ENCODE measurements at regions of chr13 and their contacts with region 1.

Region 1: DNA sequence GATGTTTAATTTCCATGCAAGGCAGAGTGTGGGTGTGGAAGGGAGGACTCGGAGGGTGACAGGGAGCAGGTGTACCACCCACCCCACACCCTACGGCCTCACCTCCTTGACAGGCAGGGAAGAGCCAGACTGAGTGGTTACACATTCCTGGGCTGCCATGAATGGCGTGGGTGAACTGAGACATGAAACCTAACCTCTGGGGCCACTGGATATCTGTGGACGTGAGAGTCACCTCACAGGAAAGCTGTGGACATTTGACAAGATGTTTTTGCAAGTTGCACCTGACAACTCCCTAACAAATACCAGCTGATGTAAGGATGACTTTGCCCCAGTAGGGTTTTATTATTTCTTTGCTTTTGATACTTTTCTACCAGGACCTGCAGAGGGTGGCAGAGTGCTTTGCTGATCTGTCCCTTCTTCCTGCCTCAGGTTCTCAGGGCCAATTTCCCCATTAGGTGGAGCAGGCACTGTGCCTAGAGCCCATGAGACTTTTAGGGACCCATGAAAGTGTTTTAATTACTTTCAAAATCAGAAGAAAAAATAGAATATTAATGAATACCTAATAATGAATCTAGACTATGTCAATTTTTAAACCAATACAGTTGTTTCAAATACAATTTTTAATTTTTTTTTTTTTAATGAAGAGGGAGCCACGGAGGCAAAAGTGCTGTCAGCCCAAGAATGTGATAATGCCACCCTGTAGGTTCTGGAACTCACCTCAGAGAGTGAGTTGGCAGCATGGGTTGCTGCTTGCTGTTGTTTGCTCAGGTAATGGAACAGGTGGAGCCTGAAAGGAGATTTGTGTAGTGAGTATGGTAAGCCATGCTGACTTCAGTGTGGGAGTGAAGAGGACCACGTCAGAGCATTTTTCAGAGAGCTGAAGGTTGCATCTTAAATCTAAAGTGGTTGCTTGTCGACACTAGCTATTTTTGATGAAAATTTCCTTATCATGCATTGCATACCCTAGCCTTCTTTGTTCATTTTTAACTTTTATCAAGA is 58.0 kb upstream of the CYSLTR2 start:
- DNase-seq: peak; percentile 79
- ATAC-seq: peak; percentile 94
- H3K4me3 ChIP-seq: no peak overlapping the region
- H3K27ac ChIP-seq: no peak overlapping the region
- H3K4me1 ChIP-seq: peaks cover 56% of the 10 kb centered on the region
- H3K27me3 ChIP-seq: no peaks in the 10 kb centered on the region
- CTCF ChIP-seq: peak; percentile 87
- EP300 ChIP-seq: no peak
- POLR2A ChIP-seq: no peak
- RAD21 ChIP-seq: peak; percentile 84

Region 2: GRCh38 chr13:48110931-48111721 is 484.6 kb before region 1 on chr13:
- CTCF ChIA-PET with region 1: no interaction called
- POLR2A ChIA-PET with region 1: no interaction called
- in situ Hi-C with region 1: loop called (anchors 25 kb)
- intact Hi-C with region 1: no loop called
- DNase-seq: peak; percentile 83
- ATAC-seq: peak; percentile 94
- H3K4me3 ChIP-seq: no peak overlapping the region; a peak in 2 of 6 replicates
- H3K27ac ChIP-seq: peak overlapping the region; percentile 78
- H3K4me1 ChIP-seq: peaks cover 71% of the 10 kb centered on the region
- H3K27me3 ChIP-seq: no peaks in the 10 kb centered on the region
- CTCF ChIP-seq: no peak
- EP300 ChIP-seq: peak in 1 of 2 experiments; percentile 67; a peak in 1 of 4 replicates
- POLR2A ChIP-seq: no peak
- RAD21 ChIP-seq: no peak

Region 3: GRCh38 chr13:48532506-48533499 is 62.9 kb before region 1 on chr13 and contains the start of gene RCBTB2:
- CTCF ChIA-PET with region 1: no interaction called
- POLR2A ChIA-PET with region 1: no interaction called
- in situ Hi-C with region 1: no loop called
- intact Hi-C with region 1: no loop called
- DNase-seq: peak; percentile 93
- ATAC-seq: peak; percentile 94
- H3K4me3 ChIP-seq: peak within 1 kb of the TSS; percentile 83 to 95 (median 92)
- H3K27ac ChIP-seq: peak within 1 kb of the TSS; percentile 72
- H3K4me1 ChIP-seq: peaks cover 32% of the 10 kb centered on the region
- H3K27me3 ChIP-seq: no peaks in the 10 kb centered on the region; a peak in 1 of 5 replicates
- CTCF ChIP-seq: peak; percentile 17; the same call in 1 of the 2 replicates
- EP300 ChIP-seq: no peak
- POLR2A ChIP-seq: peak; percentile 85 to 88
- RAD21 ChIP-seq: 0 out of 2 replicates have a peak, but pooled peaks have one; percentile 9
- total RNA-seq, gene RCBTB2: 1.9 and 3.0 TPM in 2 replicates

Region 4: GRCh38 chr13:48647630-48648029 is 51.9 kb after region 1 on chr13:
- CTCF ChIA-PET with region 1: interaction called, 28 read pairs
- POLR2A ChIA-PET with region 1: no interaction called
- in situ Hi-C with region 1: loop called (anchors 5 kb)
- intact Hi-C with region 1: loop called (anchors 1 kb)
- DNase-seq: peak; percentile 34
- ATAC-seq: peak; percentile 92
- H3K4me3 ChIP-seq: no peak overlapping the region
- H3K27ac ChIP-seq: no peak overlapping the region
- H3K4me1 ChIP-seq: no peaks in the 10 kb centered on the region; the same call in 1 of the 2 replicates
- H3K27me3 ChIP-seq: peaks cover 0 to 10% of the 10 kb centered on the region in 2 experiments; a peak in 1 of 5 replicates
- CTCF ChIP-seq: peak; percentile 85
- EP300 ChIP-seq: no peak
- POLR2A ChIP-seq: no peak
- RAD21 ChIP-seq: peak; percentile 54

Region 5: GRCh38 chr13:48731957-48732569 is 136.3 kb after region 1 on chr13:
- CTCF ChIA-PET with region 1: interaction called, 23 read pairs
- POLR2A ChIA-PET with region 1: no interaction called
- in situ Hi-C with region 1: loop called (anchors 5 kb)
- intact Hi-C with region 1: loop called (anchors 1 kb)
- DNase-seq: peak; percentile 11
- ATAC-seq: peak; percentile 98
- H3K4me3 ChIP-seq: no peak overlapping the region
- H3K27ac ChIP-seq: no peak overlapping the region
- H3K4me1 ChIP-seq: no peaks in the 10 kb centered on the region
- H3K27me3 ChIP-seq: peaks cover 0 to 5% of the 10 kb centered on the region in 2 experiments; a peak in 1 of 5 replicates
- CTCF ChIP-seq: peak; percentile 79
- EP300 ChIP-seq: no peak
- POLR2A ChIP-seq: no peak
- RAD21 ChIP-seq: peak; percentile 48; the same call in 1 of the 2 replicates

Measured in HepG2 (cell line).